Dorsolateral prefrontal cortex (tissue), 120 donors: ENCODE measurements at regions of chr19 and their contacts with region 1.

Region 1: DNA sequence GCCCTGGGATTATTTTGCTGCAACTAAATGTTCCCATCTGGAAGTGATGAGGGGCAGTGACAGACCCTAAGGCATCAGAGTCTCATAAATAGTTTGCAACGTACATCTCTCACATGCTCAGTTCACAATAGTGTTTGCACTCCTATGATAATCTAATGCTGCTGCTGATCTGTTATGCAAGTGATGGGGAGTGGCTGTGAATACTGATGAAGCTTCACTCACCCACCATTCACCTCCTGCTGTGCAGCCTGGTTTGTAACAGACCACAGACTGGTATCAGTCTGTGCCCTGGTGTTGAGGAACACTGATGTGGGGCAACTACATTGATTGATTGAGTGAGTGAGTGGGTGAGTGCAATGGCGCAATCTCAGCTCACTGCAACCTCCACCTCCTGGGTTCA is 54.9 kb downstream of the ZNF726 start:
- DNase-seq: no peak
- H3K4me3 ChIP-seq: no peak overlapping the region
- H3K27ac ChIP-seq: no peak overlapping the region
- H3K27me3 ChIP-seq: peaks cover 0 to 63% (median 33%) of the 10 kb centered on the region in 45 donors
- CTCF ChIP-seq: no peak

Region 2: GRCh38 chr19:23876261-23876660 is 93.4 kb before region 1 on chr19:
- intact Hi-C with region 1: loop called (anchors 5 kb)
- DNase-seq: no peak
- H3K4me3 ChIP-seq: no peak overlapping the region
- H3K27ac ChIP-seq: no peak overlapping the region
- H3K27me3 ChIP-seq: peaks cover 0 to 4% (median 0%) of the 10 kb centered on the region in 45 donors
- CTCF ChIP-seq: no peak

Region 3: DNA sequence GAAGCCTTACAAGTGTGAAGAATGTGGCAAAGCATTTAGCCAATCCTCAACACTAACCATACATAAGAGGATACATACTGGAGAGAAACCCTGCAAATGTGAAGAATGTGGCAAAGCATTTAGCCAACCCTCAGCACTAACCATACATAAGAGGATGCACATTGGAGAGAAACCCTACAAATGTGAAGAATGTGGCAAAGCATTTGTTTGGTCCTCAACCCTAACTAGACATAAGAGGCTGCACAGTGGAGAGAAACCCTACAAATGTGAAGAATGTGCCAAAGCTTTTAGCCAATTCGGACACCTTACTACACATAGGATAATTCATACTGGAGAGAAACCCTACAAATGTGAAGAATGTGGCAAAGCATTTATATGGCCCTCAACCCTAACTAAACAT is 36.8 kb before region 1 on chr19:
- intact Hi-C with region 1: no loop called
- DNase-seq: no peak
- H3K4me3 ChIP-seq: no peak overlapping the region
- H3K27ac ChIP-seq: no peak overlapping the region
- H3K27me3 ChIP-seq: no peaks in the 10 kb centered on the region
- CTCF ChIP-seq: no peak

Region 4: DNA sequence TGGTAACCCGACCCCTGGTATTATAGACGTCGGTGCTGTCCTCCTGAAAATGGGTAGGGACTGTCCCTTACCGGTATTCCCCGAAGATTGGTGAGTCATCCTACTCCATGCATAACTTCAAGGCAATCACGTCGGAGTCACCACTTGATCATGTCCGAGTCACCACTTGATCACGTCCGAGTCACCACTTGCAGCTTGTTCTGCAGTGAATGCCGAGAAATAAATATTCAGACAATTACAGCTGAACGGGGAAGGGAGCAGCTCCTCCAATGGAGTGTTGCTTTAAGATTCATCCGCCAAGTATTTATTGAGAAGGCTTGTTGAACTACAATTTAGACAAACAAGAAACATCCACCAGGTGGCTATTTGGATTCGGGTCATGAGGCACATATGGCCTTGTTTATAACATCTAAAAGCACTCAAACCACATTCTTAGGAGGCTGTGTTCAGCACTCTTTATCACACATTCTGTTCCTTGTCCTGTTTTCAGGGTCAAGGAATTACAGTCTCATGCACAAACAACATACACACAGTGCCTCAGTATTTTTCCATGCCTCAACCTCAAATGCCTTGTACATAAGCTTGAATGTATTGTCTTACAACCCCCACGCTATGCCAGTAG is 11.9 kb before region 1 on chr19:
- intact Hi-C with region 1: no loop called
- DNase-seq: no peak
- H3K4me3 ChIP-seq: no peak overlapping the region
- H3K27ac ChIP-seq: no peak overlapping the region
- H3K27me3 ChIP-seq: no peaks in the 10 kb centered on the region
- CTCF ChIP-seq: no peak